ENCODE measurements at regions of chr5 and their contacts with region 1.

Region 1: GRCh38 chr5:145856285-145856818 is 16.5 kb downstream of the GRXCR2 start:
- DNase-seq: peak; percentile 36 to 81
- H3K4me3 ChIP-seq: peak overlapping the region; percentile 48 to 59 (median 56)
- H3K27ac ChIP-seq: peak overlapping the region; percentile 45; the same call in 1 of the 2 replicates
- H3K4me1 ChIP-seq: peaks cover 3 to 5% (median 3%) of the 10 kb centered on the region in 4 experiments; a peak in 5 of 7 replicates
- H3K27me3 ChIP-seq: no peaks in the 10 kb centered on the region
- CTCF ChIP-seq: no peak
- EP300 ChIP-seq: no peak
- POLR2A ChIP-seq: peak in 1 of 2 experiments; percentile 36; a peak in 1 of 3 replicates
- RAD21 ChIP-seq: peak in 1 of 2 experiments; percentile 8; a peak in 1 of 4 replicates

Region 2: DNA sequence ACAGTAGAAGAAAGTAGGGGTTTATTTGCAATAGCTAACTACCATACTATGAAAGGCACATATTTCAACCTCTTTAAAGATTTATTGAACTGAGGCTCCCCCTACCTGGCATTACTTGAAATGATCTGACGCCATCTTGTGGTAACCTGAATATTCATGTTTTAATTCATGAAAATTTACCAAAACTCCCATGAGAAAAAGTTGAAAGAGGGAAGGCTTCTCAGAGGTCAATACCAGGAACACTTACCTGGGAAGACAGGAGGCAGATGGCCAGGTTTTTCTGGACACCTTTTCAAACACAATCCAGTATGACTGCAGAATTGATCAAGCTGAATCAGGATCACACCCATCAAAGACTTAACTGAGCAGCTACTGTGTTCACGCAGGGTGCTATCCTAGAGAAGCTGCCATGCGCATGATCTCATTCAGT is 30.6 kb before region 1 on chr5:
- CTCF ChIA-PET with region 1: interaction called, 10 read pairs
- POLR2A ChIA-PET with region 1: no interaction called
- DNase-seq: no peak
- H3K4me3 ChIP-seq: no peak overlapping the region
- H3K27ac ChIP-seq: no peak overlapping the region
- H3K4me1 ChIP-seq: no peaks in the 10 kb centered on the region
- H3K27me3 ChIP-seq: no peaks in the 10 kb centered on the region; a peak in 1 of 7 replicates
- CTCF ChIP-seq: peak in 2 of 3 experiments; percentile 65 to 89; a peak in 3 of 4 replicates
- EP300 ChIP-seq: no peak
- POLR2A ChIP-seq: no peak
- RAD21 ChIP-seq: peak; percentile 67 to 72

Region 3: DNA sequence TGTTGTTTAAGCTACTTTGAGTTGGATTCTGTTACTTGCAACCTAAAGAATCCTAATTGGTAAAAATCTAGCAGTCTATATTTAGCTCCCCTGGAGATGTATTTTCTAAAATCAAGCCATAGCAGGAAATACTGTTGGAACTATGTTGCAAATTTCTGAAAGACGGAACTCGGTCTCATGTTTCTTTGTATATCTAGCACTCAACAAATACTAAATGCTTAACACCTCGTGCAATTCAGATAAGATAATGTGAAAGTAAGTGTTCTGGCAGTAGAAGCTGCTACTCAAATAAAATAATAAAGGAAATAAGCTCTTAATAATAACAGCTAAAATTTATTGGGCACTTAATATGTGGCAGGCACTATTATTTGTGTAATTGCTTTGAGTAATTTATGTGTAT is 10.3 kb before region 1 on chr5:
- CTCF ChIA-PET with region 1: interaction called, 5 read pairs
- POLR2A ChIA-PET with region 1: interaction called, 11 read pairs
- DNase-seq: no peak
- H3K4me3 ChIP-seq: no peak overlapping the region
- H3K27ac ChIP-seq: no peak overlapping the region
- H3K4me1 ChIP-seq: no peaks in the 10 kb centered on the region
- H3K27me3 ChIP-seq: no peaks in the 10 kb centered on the region
- CTCF ChIP-seq: no peak
- EP300 ChIP-seq: no peak
- POLR2A ChIP-seq: no peak
- RAD21 ChIP-seq: no peak

Region 4: DNA sequence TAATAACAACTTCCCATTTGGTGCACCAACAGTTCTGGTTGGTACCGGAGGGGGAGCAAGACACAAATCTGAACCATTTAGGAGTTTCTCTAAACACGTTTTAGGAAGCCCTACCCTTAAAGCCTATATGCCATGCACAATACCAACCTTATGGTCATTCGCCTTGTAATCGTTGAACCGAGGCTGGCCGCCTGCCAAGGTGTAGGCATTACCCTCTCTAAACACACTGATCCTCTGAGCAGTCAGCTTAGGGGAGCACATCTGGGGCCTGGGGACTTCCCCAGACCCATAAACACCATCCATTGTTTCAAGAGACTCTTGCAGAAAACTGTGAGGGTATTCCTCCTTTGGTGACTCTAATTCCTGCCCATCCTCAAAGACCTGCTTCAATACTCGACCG is 16.1 kb after region 1 on chr5:
- CTCF ChIA-PET with region 1: interaction called, 15 read pairs
- POLR2A ChIA-PET with region 1: no interaction called
- DNase-seq: no peak
- H3K4me3 ChIP-seq: no peak overlapping the region
- H3K27ac ChIP-seq: no peak overlapping the region
- H3K4me1 ChIP-seq: no peaks in the 10 kb centered on the region
- H3K27me3 ChIP-seq: no peaks in the 10 kb centered on the region
- CTCF ChIP-seq: no peak
- EP300 ChIP-seq: no peak
- POLR2A ChIP-seq: no peak
- RAD21 ChIP-seq: no peak

Measured in H1 (cell line).